Natural killer cell (primary cell): ENCODE measurements at regions of chr10 and their contacts with region 1.

Region 1: GRCh38 chr10:118754720-118755480 is at the start of gene CACUL1:
- DNase-seq: peak; percentile 99 to 100
- ATAC-seq: peak; percentile 95 to 99 (median 97)
- H3K4me3 ChIP-seq: peak within 1 kb of the TSS; percentile 97
- H3K4me3 Mint-ChIP-seq: peak within 1 kb of the TSS; percentile 92
- H3K27ac ChIP-seq: peak within 1 kb of the TSS; percentile 91
- H3K27ac Mint-ChIP-seq: peak within 1 kb of the TSS; percentile 92 to 95
- H3K4me1 ChIP-seq: peaks cover 19% of the 10 kb centered on the region
- H3K4me1 Mint-ChIP-seq: peaks cover 32 to 39% of the 10 kb centered on the region in 2 donors
- H3K27me3 ChIP-seq: peaks cover 5% of the 10 kb centered on the region
- H3K27me3 Mint-ChIP-seq: peaks cover 0 to 7% of the 10 kb centered on the region in 2 donors
- CTCF ChIP-seq: no peak
- total RNA-seq, gene CACUL1: 45.4 to 65.9 (median 47.6) TPM

Region 2: GRCh38 chr10:118729641-118730258 is 25.1 kb before region 1 on chr10:
- intact Hi-C with region 1: loop called (anchors 1 kb)
- DNase-seq: peak in 1 of 2 donors; percentile 58
- ATAC-seq: peak; percentile 86 to 93 (median 90)
- H3K4me3 ChIP-seq: no peak overlapping the region
- H3K4me3 Mint-ChIP-seq: peak overlapping the region; percentile 64
- H3K27ac ChIP-seq: peak overlapping the region; percentile 86
- H3K27ac Mint-ChIP-seq: peak overlapping the region; percentile 84 to 91
- H3K4me1 ChIP-seq: peaks cover 18% of the 10 kb centered on the region
- H3K4me1 Mint-ChIP-seq: peaks cover 51 to 57% of the 10 kb centered on the region in 2 donors
- H3K27me3 ChIP-seq: no peaks in the 10 kb centered on the region
- H3K27me3 Mint-ChIP-seq: no peaks in the 10 kb centered on the region
- CTCF ChIP-seq: no peak

Region 3: GRCh38 chr10:118735294-118735693 is 19.6 kb before region 1 on chr10:
- intact Hi-C with region 1: loop called (anchors 1 kb)
- DNase-seq: no peak
- ATAC-seq: no peak
- H3K4me3 ChIP-seq: no peak overlapping the region
- H3K4me3 Mint-ChIP-seq: no peak overlapping the region
- H3K27ac ChIP-seq: no peak overlapping the region
- H3K27ac Mint-ChIP-seq: no peak overlapping the region
- H3K4me1 ChIP-seq: peaks cover 18% of the 10 kb centered on the region
- H3K4me1 Mint-ChIP-seq: peaks cover 69 to 70% of the 10 kb centered on the region in 2 donors
- H3K27me3 ChIP-seq: no peaks in the 10 kb centered on the region
- H3K27me3 Mint-ChIP-seq: no peaks in the 10 kb centered on the region
- CTCF ChIP-seq: no peak

Region 4: DNA sequence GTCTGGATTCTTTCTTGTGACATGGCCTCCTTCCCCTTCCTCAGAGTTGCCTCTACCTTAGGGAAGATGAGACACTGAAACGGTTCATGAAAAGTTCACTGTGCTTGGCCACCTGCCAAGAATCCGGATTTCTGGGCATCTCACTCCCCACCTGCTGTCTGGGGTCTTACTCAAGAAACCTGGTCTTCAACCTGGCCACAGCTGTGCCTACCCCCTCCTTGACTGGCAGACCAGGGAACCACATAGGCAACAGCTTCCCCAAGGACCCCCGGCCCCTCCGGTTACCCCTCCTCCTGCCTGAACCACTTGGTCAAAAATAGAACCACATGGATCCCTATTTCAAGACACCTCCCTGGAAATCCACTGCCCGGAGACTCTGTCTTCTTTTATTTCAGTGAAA is 215.9 kb after region 1 on chr10:
- intact Hi-C with region 1: no loop called
- DNase-seq: no peak
- ATAC-seq: no peak
- H3K4me3 ChIP-seq: no peak overlapping the region
- H3K4me3 Mint-ChIP-seq: no peak overlapping the region
- H3K27ac ChIP-seq: no peak overlapping the region
- H3K27ac Mint-ChIP-seq: no peak overlapping the region
- H3K4me1 ChIP-seq: no peaks in the 10 kb centered on the region
- H3K4me1 Mint-ChIP-seq: no peaks in the 10 kb centered on the region
- H3K27me3 ChIP-seq: no peaks in the 10 kb centered on the region
- H3K27me3 Mint-ChIP-seq: peaks cover 15 to 30% of the 10 kb centered on the region in 2 donors
- CTCF ChIP-seq: no peak